Heart left ventricle (tissue), 16 donors: ENCODE measurements at regions of chr4 and their contacts with region 1.

Region 1: GRCh38 chr4:119212234-119212963 is at the start of gene USP53:
- DNase-seq: peak; percentile 95 to 98 (median 97)
- ATAC-seq: peak; percentile 96 to 98 (median 98)
- H3K4me3 ChIP-seq: peak within 1 kb of the TSS; percentile 50 to 93 (median 83)
- H3K27ac ChIP-seq: peak within 1 kb of the TSS; percentile 88 to 99 (median 96)
- H3K4me1 ChIP-seq: peaks cover 0 to 46% (median 15%) of the 10 kb centered on the region in 12 donors
- H3K27me3 ChIP-seq: no peaks in the 10 kb centered on the region
- CTCF ChIP-seq: no peak
- POLR2A ChIP-seq: peak in 1 of 2 donors; percentile 92
- total RNA-seq, gene USP53: 32.9 to 52.9 (median 43.7) TPM

Region 2: GRCh38 chr4:118974758-118975157 is 237.6 kb before region 1 on chr4:
- intact Hi-C with region 1: loop called in 1 of 10 experiments (anchors 5 kb)
- DNase-seq: no peak
- ATAC-seq: peak in 1 of 4 donors; percentile 27
- H3K4me3 ChIP-seq: no peak overlapping the region
- H3K27ac ChIP-seq: peak overlapping the region in 8 of 12 donors; percentile 1 to 71 (median 24)
- H3K4me1 ChIP-seq: peaks cover 0 to 73% (median 32%) of the 10 kb centered on the region in 12 donors
- H3K27me3 ChIP-seq: no peaks in the 10 kb centered on the region
- CTCF ChIP-seq: no peak
- POLR2A ChIP-seq: no peak

Region 3: GRCh38 chr4:119113033-119113655 is 99.3 kb before region 1 on chr4:
- intact Hi-C with region 1: loop called in 1 of 10 experiments (anchors 10 kb)
- DNase-seq: no peak
- ATAC-seq: peak in 3 of 4 donors; percentile 81 to 87 (median 83)
- H3K4me3 ChIP-seq: no peak overlapping the region
- H3K27ac ChIP-seq: peak overlapping the region in 9 of 12 donors; percentile 6 to 78 (median 46)
- H3K4me1 ChIP-seq: peaks cover 0 to 36% (median 17%) of the 10 kb centered on the region in 12 donors
- H3K27me3 ChIP-seq: no peaks in the 10 kb centered on the region
- CTCF ChIP-seq: no peak
- POLR2A ChIP-seq: no peak

Region 4: GRCh38 chr4:119162174-119162573 is 50.2 kb before region 1 on chr4:
- intact Hi-C with region 1: no loop called
- DNase-seq: no peak
- ATAC-seq: peak in 3 of 4 donors; percentile 12 to 47 (median 43)
- H3K4me3 ChIP-seq: no peak overlapping the region
- H3K27ac ChIP-seq: peak overlapping the region in 3 of 12 donors; percentile 15 to 26 (median 25)
- H3K4me1 ChIP-seq: peaks cover 0 to 49% (median 8%) of the 10 kb centered on the region in 12 donors
- H3K27me3 ChIP-seq: no peaks in the 10 kb centered on the region
- CTCF ChIP-seq: no peak
- POLR2A ChIP-seq: no peak

Region 5: GRCh38 chr4:119179011-119179410 is 33.4 kb before region 1 on chr4:
- intact Hi-C with region 1: loop called in 2 of 10 experiments (anchors 5 kb)
- DNase-seq: no peak
- ATAC-seq: peak in 3 of 4 donors; percentile 23 to 47 (median 36)
- H3K4me3 ChIP-seq: no peak overlapping the region
- H3K27ac ChIP-seq: peak overlapping the region in 3 of 12 donors; percentile 5 to 29 (median 9)
- H3K4me1 ChIP-seq: peaks cover 0 to 21% (median 0%) of the 10 kb centered on the region in 12 donors
- H3K27me3 ChIP-seq: no peaks in the 10 kb centered on the region
- CTCF ChIP-seq: no peak
- POLR2A ChIP-seq: no peak

Region 6: DNA sequence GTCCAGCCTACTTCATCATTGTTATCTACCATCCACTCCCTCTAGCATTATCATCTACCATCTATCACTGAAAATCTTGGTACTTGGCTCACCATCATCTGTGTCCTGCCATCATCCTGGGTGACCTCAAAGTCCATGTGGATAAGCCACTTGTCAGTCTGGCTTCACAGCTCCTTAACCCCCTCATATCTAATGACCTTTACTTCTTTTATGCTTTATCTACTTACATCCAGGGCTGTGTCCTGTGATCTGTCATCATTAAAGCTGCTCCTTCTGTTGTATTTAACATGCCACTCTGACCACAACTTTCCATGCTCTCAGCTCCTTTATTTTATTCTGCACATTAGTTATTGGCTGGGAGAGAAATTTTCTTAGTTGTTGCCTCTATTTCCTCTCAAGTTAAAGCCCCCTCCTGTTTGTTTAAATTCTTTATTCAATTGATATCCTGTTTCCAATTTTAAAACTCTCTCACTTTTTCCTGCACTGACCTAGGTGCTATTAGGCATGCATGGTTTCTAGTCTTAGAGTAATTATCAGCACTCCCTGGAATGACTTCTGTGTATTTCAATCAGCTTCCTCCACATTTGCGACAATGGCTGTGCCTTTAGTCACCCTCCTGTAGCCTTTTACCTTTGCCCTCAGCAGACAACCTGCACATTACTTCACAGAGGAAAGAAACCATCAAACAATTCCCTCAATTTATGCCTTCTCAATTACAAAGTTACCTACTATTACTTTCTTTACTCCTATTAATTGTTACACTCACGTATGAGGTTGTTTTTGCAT is 117.6 kb after region 1 on chr4:
- intact Hi-C with region 1: no loop called
- DNase-seq: no peak
- ATAC-seq: peak in 3 of 4 donors; percentile 44 to 95 (median 93)
- H3K4me3 ChIP-seq: no peak overlapping the region
- H3K27ac ChIP-seq: peak overlapping the region in 4 of 12 donors; percentile 20 to 68 (median 40)
- H3K4me1 ChIP-seq: peaks cover 0 to 9% (median 0%) of the 10 kb centered on the region in 12 donors
- H3K27me3 ChIP-seq: no peaks in the 10 kb centered on the region
- CTCF ChIP-seq: no peak
- POLR2A ChIP-seq: no peak